ENCODE measurements at regions of chr1 and their contacts with region 1.

Region 1: DNA sequence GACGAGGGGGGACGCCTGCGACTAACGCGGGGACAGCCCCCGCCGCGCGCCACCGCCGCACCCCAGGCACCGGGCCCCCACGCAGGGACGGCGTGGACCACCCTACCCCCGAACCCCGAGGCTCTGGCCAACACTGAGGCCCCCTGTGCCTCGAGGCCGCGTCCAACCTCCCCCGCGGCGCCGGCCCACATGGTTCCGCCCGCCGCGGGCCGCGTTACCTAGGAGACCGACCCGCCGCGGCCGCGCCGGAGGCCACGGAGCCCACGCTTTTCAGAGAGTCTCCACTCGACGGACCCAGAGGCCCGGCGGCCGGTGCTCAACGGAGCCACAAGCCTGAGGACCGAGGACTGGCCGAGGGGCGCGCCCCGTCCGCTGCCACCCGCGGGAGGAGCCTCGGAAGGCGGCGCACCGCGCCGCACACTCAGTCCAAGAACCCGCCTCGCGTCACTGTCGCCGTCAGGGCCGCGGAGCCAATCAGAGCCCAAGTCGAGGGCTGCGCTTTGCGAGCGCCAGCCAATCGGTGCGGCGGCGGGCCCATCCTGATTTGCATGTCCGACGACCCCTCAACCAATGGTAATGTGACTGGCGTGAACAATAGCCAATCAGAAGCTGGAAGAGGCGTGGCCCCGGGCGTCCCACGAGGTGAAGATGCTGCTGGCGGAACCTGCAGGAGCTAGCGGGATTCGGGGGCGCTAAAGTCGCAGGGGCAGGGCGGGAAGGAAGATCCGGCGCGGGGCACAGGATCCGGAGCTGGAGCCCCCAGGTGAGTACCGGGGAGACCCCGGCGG is at the start of gene NPHP4:
- DNase-seq: peak; percentile 100
- H3K4me3 Mint-ChIP-seq: peak within 1 kb of the TSS; percentile 81
- H3K27ac Mint-ChIP-seq: peak within 1 kb of the TSS; percentile 79
- H3K4me1 Mint-ChIP-seq: peaks cover 22% of the 10 kb centered on the region
- H3K27me3 Mint-ChIP-seq: no peaks in the 10 kb centered on the region
- total RNA-seq, gene NPHP4: 10.7 to 11.2 TPM

Region 2: GRCh38 chr1:6199298-6200187 is 207.3 kb after region 1 on chr1 and contains the start of gene RPL22:
- CTCF ChIA-PET with region 1: no interaction called
- intact Hi-C with region 1: loop called (anchors 1 kb)
- DNase-seq: peak; percentile 99
- H3K4me3 Mint-ChIP-seq: peak within 1 kb of the TSS; percentile 91
- H3K27ac Mint-ChIP-seq: peak within 1 kb of the TSS; percentile 95
- H3K4me1 Mint-ChIP-seq: peaks cover 39% of the 10 kb centered on the region
- H3K27me3 Mint-ChIP-seq: no peaks in the 10 kb centered on the region
- total RNA-seq, gene RPL22: 507 to 553 TPM

Measured in activated naive CD4-positive, alpha-beta T cell treated with anti-CD3 and anti-CD28 coated beads for 36 hours (primary cell).